K562 (cell line): ENCODE measurements at regions of chr16 and their contacts with region 1.

Region 1: GRCh38 chr16:2439598-2439997 is 10.4 kb downstream of the CCNF start:
- DNase-seq: no peak
- ATAC-seq: no peak; the same call in 2 of the 3 replicates
- H3K4me3 ChIP-seq: no peak overlapping the region
- H3K27ac ChIP-seq: no peak overlapping the region
- H3K4me1 ChIP-seq: peaks cover 0 to 3% of the 10 kb centered on the region in 2 experiments; a peak in 1 of 5 replicates
- H3K27me3 ChIP-seq: no peaks in the 10 kb centered on the region
- CTCF ChIP-seq: no peak
- EP300 ChIP-seq: no peak
- POLR2A ChIP-seq: no peak
- RAD21 ChIP-seq: no peak

Region 2: GRCh38 chr16:2450535-2450934 is 10.9 kb after region 1 on chr16:
- CTCF ChIA-PET with region 1: no interaction called
- POLR2A ChIA-PET with region 1: interaction called, 10 read pairs
- in situ Hi-C with region 1: no loop called
- intact Hi-C with region 1: no loop called
- DNase-seq: no peak
- ATAC-seq: no peak
- H3K4me3 ChIP-seq: no peak overlapping the region
- H3K27ac ChIP-seq: no peak overlapping the region
- H3K4me1 ChIP-seq: peaks cover 0 to 33% of the 10 kb centered on the region in 2 experiments; a peak in 2 of 5 replicates
- H3K27me3 ChIP-seq: no peaks in the 10 kb centered on the region; a peak in 1 of 5 replicates
- CTCF ChIP-seq: no peak
- EP300 ChIP-seq: no peak
- POLR2A ChIP-seq: no peak
- RAD21 ChIP-seq: no peak